ENCODE measurements at regions of chr14 and their contacts with region 1.

Region 1: DNA sequence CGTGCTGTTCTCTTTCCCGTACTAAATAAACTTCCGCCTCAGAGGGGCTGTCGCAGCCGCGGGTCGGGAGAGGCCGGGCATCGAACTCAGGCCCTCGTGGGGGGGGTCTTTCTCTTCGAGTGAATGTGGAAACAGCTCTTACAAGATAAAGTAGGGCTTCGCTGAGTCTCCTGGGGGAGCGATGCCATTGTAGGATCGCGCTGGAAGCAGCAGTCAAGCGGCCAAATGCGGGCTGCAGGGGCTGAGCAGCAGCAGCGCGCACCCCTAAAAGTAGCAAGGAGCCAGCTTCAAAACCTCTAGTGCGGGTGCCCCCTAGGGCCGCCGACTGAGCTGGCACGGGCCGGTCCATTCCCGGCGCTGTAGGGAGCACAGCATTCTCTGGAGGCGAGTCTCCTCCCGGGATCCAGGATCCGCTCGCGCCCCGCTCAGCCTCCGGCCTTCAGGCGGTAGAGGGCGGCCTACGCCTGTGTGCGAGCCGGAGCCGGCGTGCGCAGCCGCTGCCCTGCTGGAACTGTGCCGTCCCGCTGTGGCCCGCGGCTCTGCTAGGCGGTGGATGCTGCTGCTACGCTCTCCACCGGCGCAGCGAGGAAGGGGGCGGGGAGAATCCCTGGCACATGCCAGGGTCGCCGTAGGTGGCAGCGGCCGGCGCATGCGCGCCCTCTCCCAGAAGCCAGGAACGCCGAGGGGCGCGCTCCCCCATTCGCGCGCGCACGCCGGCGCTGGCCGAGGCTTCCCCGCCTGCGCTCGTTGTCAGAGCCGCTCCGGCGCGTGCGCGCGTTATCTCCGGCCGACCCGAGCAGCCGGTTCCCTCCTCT is at the start of gene FUT8:
- DNase-seq: peak; percentile 80
- ATAC-seq: peak; percentile 89
- H3K4me3 ChIP-seq: peak within 1 kb of the TSS; percentile 97
- H3K27ac ChIP-seq: peak within 1 kb of the TSS; percentile 88
- H3K4me1 ChIP-seq: no peaks in the 10 kb centered on the region
- H3K27me3 ChIP-seq: no peaks in the 10 kb centered on the region
- CTCF ChIP-seq: peak; percentile 51 to 67 (median 61)
- EP300 ChIP-seq: no peak
- POLR2A ChIP-seq: peak; percentile 90
- RAD21 ChIP-seq: peak; percentile 54
- polyA plus RNA-seq, gene FUT8: 25.0 to 45.6 TPM

Region 2: GRCh38 chr14:65128096-65128495 is 284.1 kb before region 1 on chr14:
- CTCF ChIA-PET with region 1: no interaction called
- POLR2A ChIA-PET with region 1: no interaction called
- RAD21 ChIA-PET with region 1: no interaction called
- SMC1A ChIA-PET with region 1: no interaction called
- in situ Hi-C with region 1: no loop called
- intact Hi-C with region 1: no loop called
- DNase-seq: no peak
- ATAC-seq: no peak
- H3K4me3 ChIP-seq: no peak overlapping the region
- H3K27ac ChIP-seq: no peak overlapping the region
- H3K4me1 ChIP-seq: no peaks in the 10 kb centered on the region
- H3K27me3 ChIP-seq: no peaks in the 10 kb centered on the region
- CTCF ChIP-seq: no peak
- EP300 ChIP-seq: no peak
- POLR2A ChIP-seq: no peak
- RAD21 ChIP-seq: no peak

Region 3: GRCh38 chr14:65170768-65171507 is 241.3 kb before region 1 on chr14:
- CTCF ChIA-PET with region 1: interaction called, 125 read pairs
- POLR2A ChIA-PET with region 1: interaction called, 4 read pairs
- RAD21 ChIA-PET with region 1: interaction called, 42 read pairs
- SMC1A ChIA-PET with region 1: interaction called, 46 read pairs
- in situ Hi-C with region 1: loop called (anchors 5 kb)
- intact Hi-C with region 1: no loop called
- DNase-seq: peak; percentile 40
- ATAC-seq: peak; percentile 55
- H3K4me3 ChIP-seq: peak overlapping the region; percentile 57
- H3K27ac ChIP-seq: peak overlapping the region; percentile 59
- H3K4me1 ChIP-seq: peaks cover 26% of the 10 kb centered on the region
- H3K27me3 ChIP-seq: no peaks in the 10 kb centered on the region
- CTCF ChIP-seq: peak in 2 of 3 experiments; percentile 25 to 43; a peak in 3 of 6 replicates
- EP300 ChIP-seq: no peak
- POLR2A ChIP-seq: 0 out of 2 replicates have a peak, but pooled peaks have one; percentile 44
- RAD21 ChIP-seq: peak; percentile 46

Region 4: GRCh38 chr14:65302571-65303189 is 109.6 kb before region 1 on chr14:
- CTCF ChIA-PET with region 1: interaction called, 40 read pairs
- POLR2A ChIA-PET with region 1: interaction called, 7 read pairs
- RAD21 ChIA-PET with region 1: interaction called, 99 read pairs
- SMC1A ChIA-PET with region 1: interaction called, 100 read pairs
- in situ Hi-C with region 1: no loop called
- intact Hi-C with region 1: loop called (anchors 5 kb)
- DNase-seq: peak; percentile 98
- ATAC-seq: peak; percentile 69
- H3K4me3 ChIP-seq: peak overlapping the region; percentile 66
- H3K27ac ChIP-seq: peak overlapping the region; percentile 96
- H3K4me1 ChIP-seq: peaks cover 49% of the 10 kb centered on the region
- H3K27me3 ChIP-seq: no peaks in the 10 kb centered on the region
- CTCF ChIP-seq: no peak
- EP300 ChIP-seq: peak in 1 of 2 experiments; percentile 65; a peak in 2 of 4 replicates
- POLR2A ChIP-seq: 0 out of 2 replicates have a peak, but pooled peaks have one; percentile 23
- RAD21 ChIP-seq: 0 out of 2 replicates have a peak, but pooled peaks have one; percentile 12

Region 5: DNA sequence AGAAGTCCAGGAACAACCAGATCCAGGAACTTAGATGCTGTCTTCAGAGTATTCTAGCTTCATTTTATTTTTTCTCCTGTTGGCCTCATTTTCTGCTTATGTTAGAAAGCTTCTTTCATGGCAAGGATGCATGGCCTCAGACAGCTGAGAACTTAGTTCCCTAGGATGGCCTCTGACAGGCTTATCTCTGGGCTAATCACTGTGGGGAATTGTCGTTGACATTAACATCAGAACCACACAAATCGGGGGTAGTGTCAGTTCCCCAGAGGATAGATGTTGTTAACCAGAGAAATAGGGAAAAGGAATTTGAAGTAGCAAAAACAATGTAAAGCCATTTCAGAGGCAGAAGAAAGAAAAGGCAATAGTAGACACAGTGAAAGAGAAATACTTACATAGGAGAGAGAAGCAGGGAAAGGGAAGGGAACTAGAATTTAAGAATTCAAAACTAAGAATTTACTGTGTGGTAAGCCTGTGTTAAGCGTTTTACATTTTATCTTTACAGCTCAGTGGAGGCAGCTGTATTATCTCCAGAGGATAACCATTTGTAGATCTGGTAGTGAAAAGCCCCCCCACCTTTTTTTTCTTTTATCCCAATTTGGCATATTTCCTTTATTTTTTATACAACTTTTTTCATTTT is 22.1 kb after region 1 on chr14:
- CTCF ChIA-PET with region 1: interaction called, 27 read pairs
- POLR2A ChIA-PET with region 1: interaction called, 4 read pairs
- RAD21 ChIA-PET with region 1: interaction called, 22 read pairs
- SMC1A ChIA-PET with region 1: interaction called, 19 read pairs
- in situ Hi-C with region 1: no loop called
- intact Hi-C with region 1: no loop called
- DNase-seq: no peak
- ATAC-seq: no peak
- H3K4me3 ChIP-seq: no peak overlapping the region
- H3K27ac ChIP-seq: peak overlapping the region; percentile 71
- H3K4me1 ChIP-seq: peaks cover 39% of the 10 kb centered on the region
- H3K27me3 ChIP-seq: no peaks in the 10 kb centered on the region
- CTCF ChIP-seq: no peak
- EP300 ChIP-seq: no peak
- POLR2A ChIP-seq: no peak
- RAD21 ChIP-seq: no peak

Region 6: DNA sequence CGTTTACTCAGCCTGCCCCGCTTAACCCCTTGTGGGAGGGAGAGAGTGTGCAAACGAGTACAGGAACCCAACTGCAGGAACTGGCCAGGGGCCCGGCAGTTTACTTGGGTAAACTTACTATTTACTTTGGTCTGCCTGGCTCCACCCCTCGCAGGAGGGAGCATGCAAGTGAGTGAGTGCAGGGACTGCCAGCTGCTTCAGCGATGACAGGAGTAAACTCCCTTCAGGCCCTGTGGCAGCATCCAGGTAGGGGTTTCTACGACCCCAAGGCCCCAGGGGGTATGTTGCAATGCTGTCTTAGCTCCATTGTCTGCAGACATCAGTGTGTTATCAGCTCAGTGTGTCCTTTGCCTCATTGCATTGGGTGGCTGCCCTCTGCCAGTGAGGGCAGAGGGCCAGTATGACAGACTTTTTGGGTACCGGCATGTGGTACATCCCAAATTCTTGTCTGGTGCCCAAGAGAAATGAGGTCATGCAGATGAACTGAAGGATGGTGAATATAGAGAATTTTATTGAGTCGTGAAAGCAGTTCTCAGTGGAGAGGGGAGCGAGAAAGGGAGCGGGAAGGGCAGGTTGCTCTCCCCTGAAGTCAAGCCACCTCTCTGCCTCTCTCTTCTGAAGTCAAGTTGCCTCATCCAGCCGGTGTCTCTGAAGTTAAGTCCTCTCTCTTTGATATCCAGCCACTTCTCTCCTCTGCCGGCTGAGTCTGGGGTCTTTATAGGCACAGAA is 182.1 kb after region 1 on chr14:
- CTCF ChIA-PET with region 1: interaction called, 4 read pairs
- POLR2A ChIA-PET with region 1: no interaction called
- RAD21 ChIA-PET with region 1: interaction called, 10 read pairs
- SMC1A ChIA-PET with region 1: no interaction called
- in situ Hi-C with region 1: no loop called
- intact Hi-C with region 1: no loop called
- DNase-seq: no peak
- ATAC-seq: no peak
- H3K4me3 ChIP-seq: no peak overlapping the region
- H3K27ac ChIP-seq: no peak overlapping the region
- H3K4me1 ChIP-seq: no peaks in the 10 kb centered on the region
- H3K27me3 ChIP-seq: no peaks in the 10 kb centered on the region
- CTCF ChIP-seq: no peak
- EP300 ChIP-seq: no peak
- POLR2A ChIP-seq: no peak
- RAD21 ChIP-seq: no peak

Region 7: GRCh38 chr14:65783576-65783975 is 371.3 kb after region 1 on chr14:
- CTCF ChIA-PET with region 1: interaction called, 35 read pairs
- POLR2A ChIA-PET with region 1: no interaction called
- RAD21 ChIA-PET with region 1: interaction called, 6 read pairs
- SMC1A ChIA-PET with region 1: interaction called, 11 read pairs
- in situ Hi-C with region 1: no loop called
- intact Hi-C with region 1: no loop called
- DNase-seq: no peak
- ATAC-seq: no peak
- H3K4me3 ChIP-seq: no peak overlapping the region
- H3K27ac ChIP-seq: no peak overlapping the region
- H3K4me1 ChIP-seq: no peaks in the 10 kb centered on the region
- H3K27me3 ChIP-seq: no peaks in the 10 kb centered on the region; a peak in 2 of 4 replicates
- CTCF ChIP-seq: no peak
- EP300 ChIP-seq: no peak
- POLR2A ChIP-seq: no peak
- RAD21 ChIP-seq: no peak

Region 8: GRCh38 chr14:66152747-66153146 is 740.5 kb after region 1 on chr14:
- CTCF ChIA-PET with region 1: no interaction called
- POLR2A ChIA-PET with region 1: no interaction called
- RAD21 ChIA-PET with region 1: no interaction called
- SMC1A ChIA-PET with region 1: no interaction called
- in situ Hi-C with region 1: no loop called
- intact Hi-C with region 1: no loop called
- DNase-seq: no peak
- ATAC-seq: no peak
- H3K4me3 ChIP-seq: no peak overlapping the region
- H3K27ac ChIP-seq: no peak overlapping the region
- H3K4me1 ChIP-seq: no peaks in the 10 kb centered on the region
- H3K27me3 ChIP-seq: no peaks in the 10 kb centered on the region
- CTCF ChIP-seq: no peak
- EP300 ChIP-seq: no peak
- POLR2A ChIP-seq: no peak
- RAD21 ChIP-seq: no peak

Measured in GM12878 (cell line).